ENCODE measurements at regions of chr6 and their contacts with region 1.

Region 1: DNA sequence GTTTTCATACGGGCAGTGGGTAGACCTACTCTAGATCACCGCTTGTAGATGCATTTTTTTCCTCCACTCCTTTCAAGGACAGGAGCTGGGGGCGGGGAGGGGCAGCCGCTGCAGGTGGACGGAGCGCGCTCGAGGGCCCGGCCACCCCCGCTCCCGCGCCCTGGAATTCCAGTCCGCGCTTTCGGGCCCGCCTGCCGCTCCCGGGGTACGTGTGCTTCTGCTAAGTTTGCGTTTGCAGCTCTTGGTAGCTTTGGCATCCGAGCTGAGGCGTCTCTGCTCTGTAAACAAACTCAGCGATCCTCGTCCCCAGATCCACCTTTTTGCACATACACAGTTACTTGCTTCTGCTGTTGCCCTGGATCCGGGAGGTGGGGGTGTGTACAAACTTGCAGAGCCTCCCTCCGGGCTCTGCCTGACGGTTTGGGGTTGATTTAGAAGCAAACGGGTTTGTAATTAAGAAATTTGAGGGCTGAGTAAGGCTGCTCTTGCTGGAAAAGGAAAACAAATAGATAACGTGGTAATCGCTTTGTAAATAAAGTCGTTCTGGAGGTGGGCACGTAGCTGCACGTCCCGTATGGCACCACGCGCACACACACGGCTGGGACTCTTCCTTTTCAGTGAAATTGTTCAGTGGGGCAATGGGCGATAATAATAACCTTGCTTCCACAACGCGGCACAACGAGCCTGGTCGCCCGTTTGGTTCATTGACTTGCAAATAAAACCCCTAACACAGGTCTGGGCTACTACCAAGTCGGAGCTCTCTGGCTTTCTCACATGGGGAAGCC is 976 bp upstream of the CITED2 start:
- DNase-seq: peak; percentile 94
- H3K4me3 ChIP-seq: peak overlapping the region; percentile 57 to 93 (median 62)
- H3K27ac ChIP-seq: peak overlapping the region; percentile 89
- H3K4me1 ChIP-seq: peaks cover 24% of the 10 kb centered on the region
- H3K27me3 ChIP-seq: no peaks in the 10 kb centered on the region
- CTCF ChIP-seq: no peak
- POLR2A ChIP-seq: no peak

Region 2: DNA sequence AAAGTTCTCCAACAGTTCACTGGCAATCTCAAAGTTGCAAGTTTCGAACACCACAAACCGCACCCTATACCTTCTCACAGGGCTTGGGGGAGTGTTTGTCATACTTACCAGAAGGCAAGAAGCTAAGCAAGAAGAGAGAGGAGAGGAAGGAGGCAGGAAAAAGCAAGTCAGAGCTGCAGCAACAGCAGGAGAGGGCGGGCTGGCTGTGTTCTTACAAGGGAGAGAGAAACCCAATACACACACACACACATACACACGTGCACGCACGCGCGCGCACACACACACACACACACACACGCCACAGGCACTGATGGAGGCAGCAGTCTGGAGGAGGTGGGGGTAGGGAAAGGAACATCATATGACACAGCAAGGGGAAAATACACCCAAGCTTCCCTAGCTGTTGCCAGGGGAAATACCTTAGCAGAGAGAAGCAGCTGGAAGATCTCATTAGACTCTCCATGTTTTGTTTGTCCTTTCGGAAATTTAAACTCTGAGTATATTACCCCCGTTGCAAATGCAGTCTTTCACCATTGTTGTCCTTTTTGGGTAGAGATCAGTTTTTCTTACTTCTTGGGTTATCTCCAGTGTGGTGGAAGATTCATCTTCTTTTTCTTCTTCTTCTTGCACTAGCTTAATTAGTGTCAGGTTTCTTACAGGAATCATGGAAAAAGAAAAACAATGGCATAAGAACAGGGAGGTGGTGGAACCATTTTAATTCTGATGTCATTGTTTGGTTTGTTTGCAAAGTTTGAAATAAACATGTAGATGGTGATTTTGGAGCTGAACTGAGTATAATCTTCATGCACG is 83.4 kb before region 1 on chr6 and contains the start of gene TXLNB:
- CTCF ChIA-PET with region 1: no interaction called
- POLR2A ChIA-PET with region 1: no interaction called
- dilution Hi-C with region 1: no loop called
- intact Hi-C with region 1: no loop called
- DNase-seq: peak; percentile 65
- H3K4me3 ChIP-seq: no peak within 1 kb of the TSS
- H3K27ac ChIP-seq: peak within 1 kb of the TSS; percentile 9
- H3K4me1 ChIP-seq: peaks cover 15% of the 10 kb centered on the region
- H3K27me3 ChIP-seq: no peaks in the 10 kb centered on the region
- CTCF ChIP-seq: no peak
- POLR2A ChIP-seq: no peak
- total RNA-seq, gene TXLNB: 0.18 and 0.28 TPM in 2 replicates

Region 3: DNA sequence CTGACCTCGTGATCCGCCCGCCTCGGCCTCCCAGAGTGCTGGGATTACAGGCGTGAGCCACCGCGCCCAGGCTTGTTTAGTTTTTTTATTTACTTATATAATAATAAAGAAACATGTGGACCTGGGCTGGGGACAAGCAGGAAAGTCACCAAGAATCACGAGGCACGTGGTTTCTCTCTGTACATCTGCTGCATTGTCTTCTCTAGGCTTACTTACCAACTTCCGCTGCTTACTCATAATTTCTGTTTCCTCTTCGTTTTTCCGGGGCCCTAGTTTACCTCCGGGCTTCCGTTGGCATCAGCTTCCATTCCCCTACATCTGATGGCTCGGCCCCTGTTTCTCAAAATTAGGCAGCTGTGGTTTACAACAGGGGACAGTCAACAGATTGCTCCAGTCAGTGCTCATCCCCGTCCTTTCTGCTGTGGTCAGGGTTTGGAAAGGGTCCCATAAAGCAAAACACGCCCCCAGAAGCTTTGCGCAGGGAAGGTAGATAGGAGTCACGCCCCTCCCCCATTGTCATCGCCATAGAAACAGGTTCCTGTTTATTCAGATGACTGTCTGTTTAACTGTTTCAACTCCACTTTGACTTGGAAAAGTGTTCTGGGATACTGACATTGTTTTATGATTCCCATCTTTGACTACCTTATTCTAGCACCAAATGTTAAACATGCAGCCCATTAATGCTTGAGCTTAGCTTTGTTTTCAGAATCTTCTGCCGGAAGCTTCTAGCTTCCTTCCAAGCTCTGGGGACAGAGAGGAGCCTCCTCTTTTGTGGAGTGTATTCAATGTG is 51.7 kb before region 1 on chr6:
- CTCF ChIA-PET with region 1: no interaction called
- POLR2A ChIA-PET with region 1: no interaction called
- dilution Hi-C with region 1: no loop called
- intact Hi-C with region 1: no loop called
- DNase-seq: peak; percentile 71
- H3K4me3 ChIP-seq: peak overlapping the region in 2 of 3 experiments; percentile 8 to 9
- H3K27ac ChIP-seq: peak overlapping the region; percentile 71
- H3K4me1 ChIP-seq: peaks cover 6% of the 10 kb centered on the region
- H3K27me3 ChIP-seq: no peaks in the 10 kb centered on the region
- CTCF ChIP-seq: no peak
- POLR2A ChIP-seq: no peak

Region 4: GRCh38 chr6:139364302-139364981 is 11.0 kb before region 1 on chr6:
- CTCF ChIA-PET with region 1: interaction called, 10 read pairs
- POLR2A ChIA-PET with region 1: no interaction called
- dilution Hi-C with region 1: no loop called
- intact Hi-C with region 1: no loop called
- DNase-seq: peak; percentile 66
- H3K4me3 ChIP-seq: no peak overlapping the region
- H3K27ac ChIP-seq: no peak overlapping the region
- H3K4me1 ChIP-seq: peaks cover 18% of the 10 kb centered on the region
- H3K27me3 ChIP-seq: no peaks in the 10 kb centered on the region
- CTCF ChIP-seq: peak; percentile 19 to 43
- POLR2A ChIP-seq: no peak

Region 5: DNA sequence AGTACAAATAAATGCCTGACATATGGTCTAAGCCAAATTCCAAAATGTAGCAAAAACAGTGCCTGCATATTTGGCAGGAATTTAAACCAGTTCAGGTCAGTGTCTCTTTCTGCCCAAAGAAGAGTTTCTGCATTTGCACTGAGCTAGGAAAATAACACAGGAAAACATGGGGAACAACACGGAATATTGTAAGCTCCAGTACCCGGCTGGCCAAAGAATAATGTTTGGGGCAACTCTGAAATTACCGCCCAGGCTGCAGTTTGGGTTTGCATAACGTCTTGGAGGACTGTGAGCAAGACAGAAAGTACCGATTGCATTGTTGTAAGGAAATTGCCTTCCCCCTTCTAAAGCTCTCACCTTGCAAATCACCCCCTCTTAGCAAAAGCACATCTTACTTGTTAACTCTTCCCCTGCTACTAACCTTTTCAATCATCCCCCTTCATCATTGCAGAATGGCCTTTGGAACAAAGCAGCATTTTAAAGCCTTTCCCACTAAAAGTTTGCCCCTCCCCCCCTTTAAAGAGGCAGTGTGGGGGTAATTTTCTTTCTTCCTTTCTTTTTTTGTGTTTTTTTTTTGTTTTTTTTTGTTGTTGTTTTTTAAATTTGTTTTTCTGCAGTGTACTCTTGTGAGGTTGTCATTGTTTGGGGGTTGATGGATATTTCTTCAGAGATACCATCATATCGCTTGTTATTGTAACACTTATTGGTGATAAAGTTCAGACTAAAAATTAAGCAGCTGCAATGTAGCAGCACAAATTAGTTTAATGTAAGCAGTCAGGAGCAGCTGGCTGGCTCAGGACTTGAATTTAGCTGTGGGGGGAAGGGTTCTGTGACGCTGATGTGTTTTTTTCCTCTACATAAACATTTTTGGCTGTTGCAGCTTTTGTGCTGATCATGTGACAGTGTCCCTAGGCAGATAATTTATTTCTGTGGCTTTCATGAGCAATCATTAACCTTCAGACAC is 99.0 kb after region 1 on chr6:
- CTCF ChIA-PET with region 1: no interaction called
- POLR2A ChIA-PET with region 1: no interaction called
- dilution Hi-C with region 1: no loop called
- intact Hi-C with region 1: no loop called
- DNase-seq: no peak
- H3K4me3 ChIP-seq: no peak overlapping the region
- H3K27ac ChIP-seq: no peak overlapping the region
- H3K4me1 ChIP-seq: no peaks in the 10 kb centered on the region
- H3K27me3 ChIP-seq: no peaks in the 10 kb centered on the region
- CTCF ChIP-seq: no peak
- POLR2A ChIP-seq: no peak

Region 6: DNA sequence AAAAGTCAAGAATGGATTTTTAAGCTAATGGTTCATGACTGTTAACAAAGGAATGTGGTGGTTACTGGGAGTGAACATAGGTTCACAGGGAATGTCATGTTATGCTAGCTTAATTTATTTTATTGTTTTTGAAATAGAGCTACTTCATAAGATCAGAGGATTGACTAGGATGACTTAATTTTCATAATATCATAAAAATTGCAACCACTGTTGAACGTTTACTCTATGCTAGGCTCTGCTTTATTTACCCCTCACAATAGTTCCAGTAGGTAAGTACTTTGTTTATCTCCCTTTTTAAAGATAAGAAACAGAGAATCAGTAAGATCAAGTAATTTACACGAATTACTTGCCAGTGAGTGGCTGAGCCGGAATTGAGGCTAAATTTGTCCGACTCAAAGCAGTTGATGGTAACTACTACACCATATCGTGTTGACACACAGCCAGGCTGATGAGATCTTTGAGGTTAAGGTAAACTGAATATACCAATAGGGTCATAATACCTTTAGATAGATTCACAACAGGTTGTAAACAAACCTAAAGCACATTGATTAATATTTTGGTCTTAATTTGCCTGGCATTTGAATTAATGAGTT is 193.6 kb after region 1 on chr6:
- CTCF ChIA-PET with region 1: interaction called, 8 read pairs
- POLR2A ChIA-PET with region 1: interaction called, 18 read pairs
- dilution Hi-C with region 1: no loop called
- intact Hi-C with region 1: loop called (anchors 1 kb)
- DNase-seq: peak; percentile 80
- H3K4me3 ChIP-seq: peak overlapping the region in 1 of 3 experiments; percentile 22
- H3K27ac ChIP-seq: peak overlapping the region; percentile 81
- H3K4me1 ChIP-seq: peaks cover 24% of the 10 kb centered on the region
- H3K27me3 ChIP-seq: no peaks in the 10 kb centered on the region
- CTCF ChIP-seq: no peak
- POLR2A ChIP-seq: no peak

Region 7: GRCh38 chr6:139881728-139882211 is 506.3 kb after region 1 on chr6:
- CTCF ChIA-PET with region 1: interaction called, 9 read pairs
- POLR2A ChIA-PET with region 1: interaction called, 3 read pairs
- dilution Hi-C with region 1: no loop called
- intact Hi-C with region 1: loop called (anchors 1 kb)
- DNase-seq: peak; percentile 69
- H3K4me3 ChIP-seq: no peak overlapping the region
- H3K27ac ChIP-seq: no peak overlapping the region
- H3K4me1 ChIP-seq: peaks cover 14% of the 10 kb centered on the region
- H3K27me3 ChIP-seq: no peaks in the 10 kb centered on the region
- CTCF ChIP-seq: peak; percentile 42 to 49
- POLR2A ChIP-seq: no peak

Region 8: DNA sequence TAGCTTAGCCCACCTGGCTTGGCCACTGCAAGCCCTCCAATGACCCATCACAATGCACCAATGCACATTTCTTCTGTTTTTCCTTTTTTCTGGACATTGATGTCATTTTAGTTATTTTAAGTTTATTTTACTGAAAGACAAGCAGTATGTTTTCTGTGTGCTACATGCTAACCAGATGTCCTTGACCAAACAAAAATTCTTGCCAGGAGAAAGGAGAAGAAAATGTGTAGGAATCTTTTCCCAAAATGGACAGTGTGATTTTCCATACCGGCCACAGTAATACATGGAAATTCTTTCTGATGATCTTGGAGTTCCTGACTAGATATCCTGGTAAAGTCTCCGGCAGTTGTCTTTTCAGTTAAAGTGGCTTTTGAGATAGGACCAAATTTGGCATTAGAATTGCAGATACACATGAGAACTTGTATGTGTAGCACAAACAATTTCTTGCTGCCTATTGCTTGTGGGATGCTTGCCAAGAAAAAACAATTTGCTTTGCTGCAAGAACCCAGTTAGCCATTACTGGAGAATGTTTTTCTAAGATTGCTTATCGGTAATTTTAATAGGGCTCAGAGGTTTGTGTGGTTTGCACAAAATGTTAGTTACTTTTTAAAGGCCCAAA is 695.5 kb after region 1 on chr6:
- CTCF ChIA-PET with region 1: no interaction called
- POLR2A ChIA-PET with region 1: no interaction called
- dilution Hi-C with region 1: no loop called
- intact Hi-C with region 1: loop called (anchors 5 kb)
- DNase-seq: peak; percentile 77
- H3K4me3 ChIP-seq: no peak overlapping the region
- H3K27ac ChIP-seq: peak overlapping the region; percentile 40
- H3K4me1 ChIP-seq: peaks cover 24% of the 10 kb centered on the region
- H3K27me3 ChIP-seq: no peaks in the 10 kb centered on the region
- CTCF ChIP-seq: no peak
- POLR2A ChIP-seq: no peak

Region 9: DNA sequence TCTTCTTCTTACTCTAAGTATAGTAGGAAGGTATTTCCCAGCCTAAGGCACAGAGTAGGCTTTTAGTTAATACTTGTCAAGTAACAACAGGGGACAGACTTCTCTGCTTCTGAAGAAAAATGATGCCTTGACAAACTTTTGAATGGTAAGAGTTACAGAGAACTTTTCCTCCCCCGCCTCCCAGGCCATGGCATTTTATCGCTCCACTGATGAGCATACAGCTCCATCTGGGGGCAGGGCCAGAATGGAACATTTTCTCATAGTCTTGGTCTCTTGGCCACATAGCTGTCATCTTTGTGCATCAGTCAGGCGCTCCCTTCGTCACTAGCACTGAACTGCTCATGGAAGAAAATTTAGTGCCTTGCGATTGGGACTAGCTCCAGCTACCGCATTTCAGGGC is 1065.8 kb after region 1 on chr6:
- CTCF ChIA-PET with region 1: interaction called, 26 read pairs
- POLR2A ChIA-PET with region 1: interaction called, 3 read pairs
- dilution Hi-C with region 1: no loop called
- intact Hi-C with region 1: loop called (anchors 1 kb)
- DNase-seq: peak; percentile 57
- H3K4me3 ChIP-seq: no peak overlapping the region
- H3K27ac ChIP-seq: no peak overlapping the region
- H3K4me1 ChIP-seq: peaks cover 18% of the 10 kb centered on the region
- H3K27me3 ChIP-seq: no peaks in the 10 kb centered on the region
- CTCF ChIP-seq: peak; percentile 27 to 40
- POLR2A ChIP-seq: no peak

Region 10: GRCh38 chr6:140921366-140922226 is 1546.2 kb after region 1 on chr6:
- CTCF ChIA-PET with region 1: interaction called, 12 read pairs
- POLR2A ChIA-PET with region 1: no interaction called
- dilution Hi-C with region 1: no loop called
- intact Hi-C with region 1: loop called (anchors 1 kb)
- DNase-seq: peak; percentile 89
- H3K4me3 ChIP-seq: no peak overlapping the region
- H3K27ac ChIP-seq: no peak overlapping the region
- H3K4me1 ChIP-seq: peaks cover 3% of the 10 kb centered on the region
- H3K27me3 ChIP-seq: no peaks in the 10 kb centered on the region
- CTCF ChIP-seq: peak; percentile 58 to 69
- POLR2A ChIP-seq: no peak

Measured in endothelial cell of umbilical vein (primary cell).